Panc1 (cell line): ENCODE measurements at regions of chr1 and their contacts with region 1.

Region 1: DNA sequence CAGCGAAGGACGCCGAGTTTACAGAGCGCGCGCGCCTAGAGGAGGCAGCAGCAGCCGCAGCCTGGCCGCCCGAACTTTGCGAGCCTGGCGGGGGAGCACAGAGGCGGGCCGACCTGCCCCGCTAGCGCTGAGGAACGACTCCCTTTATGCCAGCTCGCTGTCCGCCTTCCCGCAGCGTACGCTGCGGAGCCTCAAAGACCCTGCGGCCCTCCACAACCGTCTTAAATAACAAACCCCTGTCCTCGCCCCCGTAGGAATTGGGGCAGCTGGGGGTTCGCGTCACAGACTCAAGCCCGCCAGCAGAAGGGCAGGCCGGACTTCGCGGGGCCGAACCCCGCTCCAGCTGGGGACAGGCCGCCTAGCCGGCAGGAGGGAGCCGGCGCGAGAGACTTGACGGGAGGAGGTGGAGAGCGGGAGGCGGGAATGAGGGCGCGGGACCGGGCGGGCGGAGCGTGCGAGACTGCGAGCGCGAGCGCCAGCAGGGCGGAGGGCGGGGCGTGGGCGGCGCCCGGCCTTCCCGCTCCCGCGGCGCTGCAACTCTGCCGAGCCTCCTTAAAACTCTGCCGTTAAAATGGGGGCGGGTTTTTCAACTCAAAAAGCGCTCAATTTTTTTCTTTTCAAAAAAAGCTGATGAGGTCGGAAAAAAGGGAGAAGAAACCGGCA is 1.8 kb upstream of the CDKN2C start:
- DNase-seq: no peak
- ATAC-seq: peak; percentile 90
- H3K4me3 ChIP-seq: peak overlapping the region; percentile 74 to 95
- H3K27ac ChIP-seq: peak overlapping the region; percentile 100
- H3K4me1 ChIP-seq: peaks cover 7% of the 10 kb centered on the region; the same call in 1 of the 2 replicates
- H3K27me3 ChIP-seq: no peaks in the 10 kb centered on the region
- CTCF ChIP-seq: peak; percentile 65

Region 2: GRCh38 chr1:50774759-50775351 is 193.4 kb before region 1 on chr1:
- CTCF ChIA-PET with region 1: interaction called, 5 read pairs
- POLR2A ChIA-PET with region 1: no interaction called
- in situ Hi-C with region 1: no loop called
- intact Hi-C with region 1: loop called (anchors 10 kb)
- DNase-seq: peak; percentile 15
- ATAC-seq: peak; percentile 74; the same call in 1 of the 2 replicates
- H3K4me3 ChIP-seq: no peak overlapping the region
- H3K27ac ChIP-seq: no peak overlapping the region
- H3K4me1 ChIP-seq: no peaks in the 10 kb centered on the region
- H3K27me3 ChIP-seq: no peaks in the 10 kb centered on the region
- CTCF ChIP-seq: peak; percentile 74; the same call in 1 of the 2 replicates

Region 3: GRCh38 chr1:50873458-50874187 is 94.7 kb before region 1 on chr1:
- CTCF ChIA-PET with region 1: interaction called, 3 read pairs
- POLR2A ChIA-PET with region 1: no interaction called
- in situ Hi-C with region 1: no loop called
- intact Hi-C with region 1: loop called (anchors 5 kb)
- DNase-seq: peak; percentile 65
- ATAC-seq: peak; percentile 98
- H3K4me3 ChIP-seq: peak overlapping the region; percentile 23 to 54
- H3K27ac ChIP-seq: peak overlapping the region; percentile 18; the same call in 1 of the 2 replicates
- H3K4me1 ChIP-seq: peaks cover 5% of the 10 kb centered on the region; the same call in 1 of the 2 replicates
- H3K27me3 ChIP-seq: no peaks in the 10 kb centered on the region
- CTCF ChIP-seq: peak; percentile 95

Region 4: GRCh38 chr1:51690285-51690961 is 722.1 kb after region 1 on chr1:
- CTCF ChIA-PET with region 1: no interaction called
- POLR2A ChIA-PET with region 1: no interaction called
- in situ Hi-C with region 1: no loop called
- intact Hi-C with region 1: no loop called
- DNase-seq: peak; percentile 92
- ATAC-seq: peak; percentile 85
- H3K4me3 ChIP-seq: no peak overlapping the region
- H3K27ac ChIP-seq: peak overlapping the region; percentile 26; the same call in 1 of the 2 replicates
- H3K4me1 ChIP-seq: peaks cover 21% of the 10 kb centered on the region
- H3K27me3 ChIP-seq: no peaks in the 10 kb centered on the region
- CTCF ChIP-seq: no peak